Activated CD8-positive, alpha-beta T cell treated with anti-CD3 and anti-CD28 coated beads, Interleukin-2, amount 10 ng/mL, durations not matched to agents 7 days and 5 days (primary cell): ENCODE measurements at regions of chr2 and their contacts with region 1.

Region 1: DNA sequence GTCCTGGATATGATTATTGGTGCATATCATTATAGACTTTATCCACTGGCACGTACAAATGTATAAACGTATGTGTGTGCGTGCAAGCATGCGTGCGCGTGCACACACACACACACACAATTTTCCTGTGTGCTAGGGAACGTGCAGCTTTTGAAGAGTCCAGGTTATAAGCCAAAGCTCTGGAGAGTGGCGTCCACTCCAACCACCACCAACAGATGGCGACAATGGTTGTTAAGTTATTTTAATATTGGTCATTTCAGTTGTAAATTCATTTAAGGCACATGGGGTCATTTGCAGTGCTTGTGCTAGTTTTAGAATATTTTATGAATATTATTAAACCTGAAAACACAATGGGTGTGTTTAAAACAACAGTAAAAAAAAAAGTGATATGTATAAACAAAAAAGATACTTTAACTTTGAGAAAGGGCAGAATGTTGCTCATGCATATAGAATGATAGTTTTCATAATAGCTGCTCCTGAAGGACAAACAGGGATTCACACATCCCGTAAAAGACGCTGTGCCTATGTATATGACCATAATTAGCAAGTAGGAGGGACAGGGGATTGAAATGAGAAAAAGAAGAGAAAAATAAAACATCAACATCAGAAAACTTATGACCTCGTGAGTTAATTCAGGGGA is 124.2 kb upstream of the ITGB6 start:
- DNase-seq: peak; percentile 58
- ATAC-seq: peak; percentile 22
- H3K4me3 Mint-ChIP-seq: no peak overlapping the region
- H3K27ac Mint-ChIP-seq: no peak overlapping the region
- H3K4me1 Mint-ChIP-seq: peaks cover 58% of the 10 kb centered on the region
- H3K27me3 Mint-ChIP-seq: no peaks in the 10 kb centered on the region

Region 2: DNA sequence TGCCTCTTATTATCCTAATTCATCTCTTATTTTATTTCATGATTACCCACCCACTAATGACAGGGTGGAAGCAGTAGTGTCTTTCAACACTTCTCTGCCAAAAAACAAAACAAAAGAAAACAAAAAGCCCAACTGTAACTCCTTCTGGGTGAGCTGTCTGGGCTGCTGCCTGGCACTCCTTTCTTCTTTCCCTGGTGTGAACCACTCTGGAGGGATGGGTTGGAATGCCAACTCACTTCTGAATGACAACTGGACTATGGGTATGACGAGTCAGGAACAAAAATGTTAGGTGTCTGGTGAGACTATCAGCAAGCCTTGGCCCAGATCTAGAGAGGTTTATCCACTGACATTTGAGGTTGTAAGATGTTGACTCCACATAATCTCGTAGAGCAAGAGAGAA is 36.0 kb before region 1 on chr2:
- CTCF ChIA-PET with region 1: interaction called, 14 read pairs
- POLR2A ChIA-PET with region 1: no interaction called
- DNase-seq: no peak
- ATAC-seq: no peak
- H3K4me3 Mint-ChIP-seq: no peak overlapping the region
- H3K27ac Mint-ChIP-seq: no peak overlapping the region
- H3K4me1 Mint-ChIP-seq: peaks cover 2% of the 10 kb centered on the region
- H3K27me3 Mint-ChIP-seq: no peaks in the 10 kb centered on the region

Region 3: DNA sequence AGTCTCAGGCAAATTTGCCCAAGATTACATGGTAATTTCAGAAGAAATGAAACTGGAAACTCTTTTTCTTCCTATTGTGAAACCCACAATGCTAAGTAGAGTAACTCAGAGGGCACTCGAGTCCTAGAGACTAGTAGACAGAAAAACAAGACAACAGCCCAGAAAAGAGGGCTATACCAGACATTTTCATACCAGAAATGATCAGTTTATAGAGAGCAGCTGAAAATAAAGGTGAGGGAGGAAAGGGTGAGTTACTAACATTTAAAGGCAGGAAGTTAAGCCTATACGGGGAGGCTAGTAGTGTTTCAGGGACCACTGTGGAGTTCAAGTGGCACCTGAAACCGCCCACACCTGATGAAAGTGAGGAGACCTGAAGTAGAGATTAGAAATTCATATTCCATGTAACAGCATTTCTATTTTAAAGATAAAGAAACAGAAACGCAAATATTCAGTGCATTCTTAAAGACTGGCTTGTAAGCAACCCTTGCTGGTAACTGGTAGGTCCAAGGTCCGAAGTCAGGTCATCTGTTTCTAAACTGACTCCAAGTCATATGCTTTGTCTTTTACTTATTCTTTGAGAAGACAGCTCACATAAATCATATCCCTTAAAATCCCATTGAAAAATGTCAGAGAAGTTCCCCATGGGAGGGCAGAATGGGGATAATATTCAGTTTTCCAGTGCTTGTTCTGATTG is 20.9 kb after region 1 on chr2:
- CTCF ChIA-PET with region 1: interaction called, 10 read pairs
- POLR2A ChIA-PET with region 1: no interaction called
- DNase-seq: no peak
- ATAC-seq: peak; percentile 44
- H3K4me3 Mint-ChIP-seq: no peak overlapping the region
- H3K27ac Mint-ChIP-seq: peak overlapping the region; percentile 43
- H3K4me1 Mint-ChIP-seq: peaks cover 40% of the 10 kb centered on the region
- H3K27me3 Mint-ChIP-seq: no peaks in the 10 kb centered on the region

Region 4: DNA sequence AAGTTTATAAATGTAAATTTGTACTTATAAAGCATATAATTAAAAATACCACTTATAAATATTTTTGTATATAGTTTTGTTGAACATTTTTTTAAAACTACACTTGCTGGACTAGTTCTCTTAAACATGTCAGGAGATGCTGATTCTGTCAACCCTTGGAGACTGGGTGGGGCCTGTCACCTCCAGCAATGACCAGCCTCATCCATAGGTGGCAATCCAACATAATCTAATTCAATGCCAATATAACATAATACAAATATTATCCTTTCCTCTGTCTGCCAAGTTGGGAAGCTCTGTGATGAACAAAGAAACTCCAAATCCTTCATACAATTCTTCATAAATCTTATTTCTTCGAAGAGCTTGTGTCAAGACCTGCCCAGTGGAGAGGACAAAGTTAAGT is 28.9 kb after region 1 on chr2:
- CTCF ChIA-PET with region 1: interaction called, 13 read pairs
- POLR2A ChIA-PET with region 1: no interaction called
- DNase-seq: peak; percentile 47
- ATAC-seq: peak; percentile 61
- H3K4me3 Mint-ChIP-seq: no peak overlapping the region
- H3K27ac Mint-ChIP-seq: no peak overlapping the region
- H3K4me1 Mint-ChIP-seq: peaks cover 33% of the 10 kb centered on the region
- H3K27me3 Mint-ChIP-seq: no peaks in the 10 kb centered on the region

Region 5: DNA sequence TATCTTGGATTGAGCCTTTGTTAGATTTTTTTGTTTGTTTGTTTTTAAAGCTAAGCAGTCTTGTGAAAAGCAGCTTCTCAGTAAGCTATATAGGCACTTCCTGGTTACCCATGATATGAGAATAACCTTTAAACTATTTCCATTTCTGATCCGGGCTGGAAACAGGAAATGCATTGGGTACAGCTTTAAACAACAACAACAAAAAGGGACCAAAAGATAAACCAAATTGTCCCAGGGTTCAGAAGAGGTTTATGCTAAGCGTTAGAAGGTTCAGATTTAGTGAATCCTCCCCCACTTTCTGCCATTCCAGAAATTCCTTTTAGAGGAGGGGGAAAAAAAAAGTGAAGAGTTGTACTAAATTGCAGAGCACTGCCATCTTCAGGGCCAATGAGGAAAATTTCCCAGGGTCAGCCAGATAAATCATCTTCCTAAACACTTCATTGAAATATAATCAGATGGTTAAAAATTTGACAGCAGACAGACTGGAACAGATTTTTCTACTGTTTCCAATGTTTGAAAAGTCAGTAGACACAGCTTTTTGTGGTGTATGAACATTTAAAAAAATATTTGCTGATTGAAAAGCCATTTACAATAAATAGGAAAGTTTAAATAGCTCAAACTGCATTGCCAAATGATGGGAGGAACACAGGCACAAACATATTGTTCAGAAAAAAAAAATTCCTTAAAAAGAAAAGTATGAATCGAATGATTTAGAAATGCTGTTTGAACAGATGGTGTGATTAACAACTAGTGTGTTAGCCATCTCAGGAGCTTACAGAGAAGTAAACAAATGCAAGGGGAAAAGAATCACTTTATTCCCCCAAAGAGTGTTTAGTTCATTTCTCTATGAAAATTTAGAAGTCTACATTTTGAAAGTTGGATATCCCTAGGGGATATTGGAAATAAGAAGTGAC is 646.0 kb after region 1 on chr2:
- CTCF ChIA-PET with region 1: interaction called, 22 read pairs
- POLR2A ChIA-PET with region 1: no interaction called
- DNase-seq: no peak
- ATAC-seq: no peak
- H3K4me3 Mint-ChIP-seq: no peak overlapping the region
- H3K27ac Mint-ChIP-seq: no peak overlapping the region
- H3K4me1 Mint-ChIP-seq: no peaks in the 10 kb centered on the region
- H3K27me3 Mint-ChIP-seq: peaks cover 20% of the 10 kb centered on the region

Region 6: GRCh38 chr2:160994141-160995002 is 670.1 kb after region 1 on chr2:
- CTCF ChIA-PET with region 1: interaction called, 34 read pairs
- POLR2A ChIA-PET with region 1: no interaction called
- DNase-seq: peak; percentile 87
- ATAC-seq: peak; percentile 87
- H3K4me3 Mint-ChIP-seq: no peak overlapping the region
- H3K27ac Mint-ChIP-seq: no peak overlapping the region
- H3K4me1 Mint-ChIP-seq: peaks cover 9% of the 10 kb centered on the region
- H3K27me3 Mint-ChIP-seq: peaks cover 6% of the 10 kb centered on the region